ENCODE measurements at regions of chr16 and their contacts with region 1.

Region 1: GRCh38 chr16:23072084-23072599 is 77.1 kb downstream of the USP31 start:
- DNase-seq: peak; percentile 72
- H3K4me3 ChIP-seq: no peak overlapping the region
- H3K27ac ChIP-seq: peak overlapping the region; percentile 37 to 51
- H3K4me1 ChIP-seq: no peaks in the 10 kb centered on the region
- H3K27me3 ChIP-seq: no peaks in the 10 kb centered on the region
- CTCF ChIP-seq: no peak
- POLR2A ChIP-seq: no peak

Region 2: DNA sequence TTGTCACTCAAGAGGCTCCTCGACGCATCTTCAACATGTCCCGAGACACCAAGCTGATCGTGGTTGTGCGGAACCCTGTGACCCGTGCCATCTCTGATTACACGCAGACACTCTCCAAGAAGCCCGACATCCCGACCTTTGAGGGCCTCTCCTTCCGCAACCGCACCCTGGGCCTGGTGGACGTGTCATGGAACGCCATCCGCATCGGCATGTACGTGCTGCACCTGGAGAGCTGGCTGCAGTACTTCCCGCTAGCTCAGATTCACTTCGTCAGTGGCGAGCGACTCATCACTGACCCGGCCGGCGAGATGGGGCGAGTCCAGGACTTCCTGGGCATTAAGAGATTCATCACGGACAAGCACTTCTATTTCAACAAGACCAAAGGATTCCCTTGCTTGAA is 157.1 kb before region 1 on chr16:
- intact Hi-C with region 1: no loop called
- DNase-seq: no peak
- H3K4me3 ChIP-seq: no peak overlapping the region
- H3K27ac ChIP-seq: no peak overlapping the region
- H3K4me1 ChIP-seq: no peaks in the 10 kb centered on the region
- H3K27me3 ChIP-seq: no peaks in the 10 kb centered on the region
- CTCF ChIP-seq: no peak
- POLR2A ChIP-seq: no peak

Region 3: GRCh38 chr16:23149349-23149996 is 77.3 kb after region 1 on chr16 and contains the start of gene USP31:
- intact Hi-C with region 1: loop called (anchors 5 kb)
- DNase-seq: peak; percentile 97
- H3K4me3 ChIP-seq: peak within 1 kb of the TSS; percentile 61 to 66
- H3K27ac ChIP-seq: peak within 1 kb of the TSS; percentile 86
- H3K4me1 ChIP-seq: peaks cover 8% of the 10 kb centered on the region
- H3K27me3 ChIP-seq: no peaks in the 10 kb centered on the region
- CTCF ChIP-seq: peak in 1 of 4 experiments; percentile 24
- POLR2A ChIP-seq: no peak
- total RNA-seq, gene USP31: 16.2 to 67.3 TPM